ENCODE measurements at regions of chr9 and their contacts with region 1.

Region 1: GRCh38 chr9:133335878-133336811 is at the start of gene SURF6:
- DNase-seq: peak; percentile 95 to 96
- ATAC-seq: peak; percentile 96 to 97 (median 97)
- H3K4me3 ChIP-seq: peak within 1 kb of the TSS; percentile 87
- H3K27ac ChIP-seq: peak within 1 kb of the TSS; percentile 88
- H3K4me1 ChIP-seq: peaks cover 24% of the 10 kb centered on the region
- H3K27me3 ChIP-seq: no peaks in the 10 kb centered on the region
- CTCF ChIP-seq: no peak
- total RNA-seq, gene SURF6: 11.4 to 27.3 (median 16.0) TPM

Region 2: DNA sequence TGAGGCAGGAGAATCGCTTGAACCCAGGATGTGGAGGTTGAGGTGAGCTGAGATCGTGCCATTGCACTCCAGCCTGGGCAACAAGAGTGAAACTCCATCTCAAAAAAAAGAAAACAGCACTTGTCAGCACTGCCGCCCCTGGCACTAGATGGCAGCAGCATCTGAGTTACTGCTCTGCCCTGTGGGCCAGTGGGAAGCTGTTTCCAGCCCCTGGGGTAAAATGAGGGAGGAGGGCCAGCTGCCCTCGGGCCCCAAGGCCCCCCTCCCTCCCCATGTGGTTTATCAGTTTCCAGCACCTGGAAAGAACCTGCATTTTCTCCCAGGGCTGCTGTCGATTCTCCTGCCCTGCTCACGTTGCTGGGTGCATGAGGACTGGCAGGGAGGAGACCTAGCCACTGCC is 287.6 kb before region 1 on chr9:
- intact Hi-C with region 1: loop called in 1 of 2 experiments (anchors 10 kb)
- DNase-seq: no peak
- ATAC-seq: peak; percentile 56 to 68 (median 61)
- H3K4me3 ChIP-seq: no peak overlapping the region
- H3K27ac ChIP-seq: no peak overlapping the region
- H3K4me1 ChIP-seq: no peaks in the 10 kb centered on the region
- H3K27me3 ChIP-seq: no peaks in the 10 kb centered on the region
- CTCF ChIP-seq: peak; percentile 31

Region 3: DNA sequence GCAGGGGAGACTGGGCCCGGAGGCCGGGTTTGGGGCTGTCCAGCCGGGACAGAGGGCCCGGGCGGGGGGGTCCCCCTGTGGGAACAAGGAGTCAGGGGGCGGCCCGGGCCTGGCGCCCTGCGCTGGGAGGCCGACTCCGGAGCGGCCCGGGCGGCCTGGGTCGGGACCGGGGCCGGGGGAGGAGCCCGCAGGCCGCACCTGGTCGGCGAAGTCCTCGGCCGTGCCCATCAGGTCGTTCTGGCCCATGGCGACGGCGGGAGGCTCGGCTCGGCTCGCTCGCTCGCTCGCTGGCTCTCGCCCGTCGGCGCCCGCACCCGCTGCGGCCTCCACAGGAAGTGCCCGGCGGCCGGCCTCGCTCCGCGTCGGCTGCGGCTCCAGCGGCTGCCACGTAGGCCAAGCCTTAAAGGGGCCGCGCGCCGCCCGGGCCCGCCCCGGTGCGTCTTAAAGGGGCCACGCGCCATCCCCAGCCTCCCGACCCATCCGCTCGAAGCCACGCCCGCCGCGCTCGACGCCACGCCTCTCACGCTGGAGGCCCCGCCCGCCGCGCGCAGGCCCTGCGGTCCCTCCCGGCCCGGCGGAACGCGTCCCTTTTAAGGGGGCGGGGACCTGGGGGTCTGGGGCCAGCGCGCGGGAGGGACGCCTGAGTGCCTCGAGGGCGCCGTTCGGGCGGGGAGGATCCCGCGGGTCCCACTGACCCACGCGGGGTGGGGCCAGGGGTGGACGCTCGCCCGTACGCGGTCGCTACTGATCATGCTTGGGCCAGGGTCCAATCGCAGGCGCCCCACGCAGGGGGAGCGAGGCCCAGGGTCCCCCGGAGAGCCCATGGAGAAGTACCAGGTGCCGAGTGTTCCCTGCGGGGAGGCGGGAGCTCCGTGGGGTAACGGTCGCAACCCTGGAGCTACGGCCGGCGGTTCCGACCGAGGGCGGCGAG is 39.8 kb after region 1 on chr9 and contains the starts of genes STKLD1 and SURF4:
- intact Hi-C with region 1: loop called in 1 of 2 experiments (anchors 5 kb)
- DNase-seq: peak; percentile 96 to 98
- ATAC-seq: peak; percentile 96 to 98 (median 98)
- H3K4me3 ChIP-seq: peak within 1 kb of the TSS; percentile 100
- H3K27ac ChIP-seq: peak within 1 kb of the TSS; percentile 97
- H3K4me1 ChIP-seq: peaks cover 41% of the 10 kb centered on the region
- H3K27me3 ChIP-seq: no peaks in the 10 kb centered on the region
- CTCF ChIP-seq: no peak
- total RNA-seq, gene STKLD1: 0.28 to 0.69 (median 0.46) TPM
- total RNA-seq, gene SURF4: 45.6 to 69.4 (median 66.8) TPM

Region 4: GRCh38 chr9:133478851-133479711 is 142.9 kb after region 1 on chr9 and contains the start of gene SLC2A6:
- intact Hi-C with region 1: loop called in 1 of 2 experiments (anchors 5 kb)
- DNase-seq: peak; percentile 89 to 91
- ATAC-seq: peak; percentile 97 to 100 (median 98)
- H3K4me3 ChIP-seq: peak within 1 kb of the TSS; percentile 75
- H3K27ac ChIP-seq: peak within 1 kb of the TSS; percentile 60
- H3K4me1 ChIP-seq: peaks cover 6% of the 10 kb centered on the region
- H3K27me3 ChIP-seq: no peaks in the 10 kb centered on the region
- CTCF ChIP-seq: no peak
- total RNA-seq, gene SLC2A6: 1.2 to 2.7 (median 1.7) TPM

Measured in psoas muscle (tissue), 8 donors.